ENCODE measurements at regions of chr10 and their contacts with region 1.

Region 1: DNA sequence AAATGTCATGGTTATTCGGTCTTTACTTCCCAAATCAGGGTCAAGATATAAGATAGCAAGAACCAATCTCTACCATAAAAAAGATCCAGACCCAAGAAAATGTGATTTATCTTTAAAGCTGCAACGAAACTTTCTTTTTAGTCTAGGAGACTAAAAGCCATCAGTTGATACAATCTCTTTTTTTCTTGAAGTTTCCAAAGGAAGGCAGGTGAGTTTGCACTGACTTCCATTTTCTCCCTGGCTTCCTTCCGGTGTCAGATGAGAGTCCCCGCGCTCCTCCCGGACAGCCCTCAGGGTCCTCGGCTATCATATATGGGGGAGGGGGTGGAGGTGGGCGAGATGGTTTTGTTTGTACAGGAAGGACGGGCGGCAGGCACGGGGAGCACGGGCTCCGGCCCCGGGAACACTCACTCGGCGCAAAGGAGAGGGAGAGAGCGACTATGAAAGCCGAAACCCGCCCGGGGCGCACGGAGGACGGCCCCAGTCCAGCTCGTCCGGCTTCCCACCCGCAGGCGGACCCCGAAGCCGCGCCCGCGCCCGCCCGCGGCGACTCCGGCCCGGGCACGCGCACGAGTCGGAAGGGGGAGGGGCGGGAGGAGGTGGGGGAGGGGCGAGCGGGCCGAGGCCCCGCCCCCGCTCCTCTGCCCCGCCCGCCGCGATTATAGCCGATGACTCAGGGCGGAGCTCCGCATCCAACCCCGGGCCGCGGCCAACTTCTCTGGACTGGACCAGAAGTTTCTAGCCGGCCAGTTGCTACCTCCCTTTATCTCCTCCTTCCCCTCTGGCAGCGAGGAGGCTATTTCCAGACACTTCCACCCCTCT is at the start of gene BAG3:
- DNase-seq: peak; percentile 85
- ATAC-seq: peak; percentile 94
- H3K4me3 ChIP-seq: peak within 1 kb of the TSS; percentile 82 to 96 (median 93)
- H3K4me3 Mint-ChIP-seq: peak within 1 kb of the TSS; percentile 97
- H3K27ac ChIP-seq: peak within 1 kb of the TSS; percentile 82 to 85
- H3K27ac Mint-ChIP-seq: peak within 1 kb of the TSS; percentile 94
- H3K4me1 ChIP-seq: peaks cover 3 to 12% of the 10 kb centered on the region in 2 donors
- H3K4me1 Mint-ChIP-seq: peaks cover 17% of the 10 kb centered on the region
- H3K27me3 ChIP-seq: peaks cover 0 to 3% (median 0%) of the 10 kb centered on the region in 4 experiments
- H3K27me3 Mint-ChIP-seq: no peaks in the 10 kb centered on the region
- CTCF ChIP-seq: no peak
- total RNA-seq, gene BAG3: 3.9 and 4.2 TPM in 2 replicates

Region 2: DNA sequence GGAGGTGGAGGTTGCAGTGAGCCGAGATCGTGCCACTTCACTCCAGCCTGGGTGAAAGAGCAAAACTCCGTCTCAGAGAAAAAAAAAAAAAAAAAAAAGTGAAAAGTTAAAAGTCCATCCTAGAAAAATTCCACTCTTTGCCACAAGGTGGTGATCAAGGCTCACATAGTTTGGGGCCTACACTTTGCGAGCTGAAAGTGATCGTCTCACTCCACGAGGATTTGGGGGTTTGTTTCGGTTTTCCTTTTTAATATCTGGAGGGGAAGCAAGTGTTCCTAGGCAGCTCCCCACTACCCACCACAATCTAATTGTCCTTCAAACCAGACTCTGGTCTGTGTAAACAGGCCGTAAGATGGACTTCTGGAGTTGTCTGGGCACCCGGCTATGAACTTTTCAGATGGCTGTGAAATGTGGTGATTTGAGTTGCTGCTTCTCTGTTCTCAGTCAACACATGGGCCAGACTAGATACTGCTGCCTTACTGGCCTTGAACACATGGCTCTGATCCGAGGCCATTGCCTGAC is 1082.5 kb before region 1 on chr10:
- CTCF ChIA-PET with region 1: no interaction called
- POLR2A ChIA-PET with region 1: no interaction called
- intact Hi-C with region 1: no loop called
- DNase-seq: peak; percentile 71
- ATAC-seq: peak; percentile 53
- H3K4me3 ChIP-seq: no peak overlapping the region
- H3K4me3 Mint-ChIP-seq: no peak overlapping the region
- H3K27ac ChIP-seq: no peak overlapping the region
- H3K27ac Mint-ChIP-seq: no peak overlapping the region
- H3K4me1 ChIP-seq: no peaks in the 10 kb centered on the region
- H3K4me1 Mint-ChIP-seq: no peaks in the 10 kb centered on the region
- H3K27me3 ChIP-seq: no peaks in the 10 kb centered on the region
- H3K27me3 Mint-ChIP-seq: peaks cover 15% of the 10 kb centered on the region
- CTCF ChIP-seq: peak; percentile 81

Region 3: DNA sequence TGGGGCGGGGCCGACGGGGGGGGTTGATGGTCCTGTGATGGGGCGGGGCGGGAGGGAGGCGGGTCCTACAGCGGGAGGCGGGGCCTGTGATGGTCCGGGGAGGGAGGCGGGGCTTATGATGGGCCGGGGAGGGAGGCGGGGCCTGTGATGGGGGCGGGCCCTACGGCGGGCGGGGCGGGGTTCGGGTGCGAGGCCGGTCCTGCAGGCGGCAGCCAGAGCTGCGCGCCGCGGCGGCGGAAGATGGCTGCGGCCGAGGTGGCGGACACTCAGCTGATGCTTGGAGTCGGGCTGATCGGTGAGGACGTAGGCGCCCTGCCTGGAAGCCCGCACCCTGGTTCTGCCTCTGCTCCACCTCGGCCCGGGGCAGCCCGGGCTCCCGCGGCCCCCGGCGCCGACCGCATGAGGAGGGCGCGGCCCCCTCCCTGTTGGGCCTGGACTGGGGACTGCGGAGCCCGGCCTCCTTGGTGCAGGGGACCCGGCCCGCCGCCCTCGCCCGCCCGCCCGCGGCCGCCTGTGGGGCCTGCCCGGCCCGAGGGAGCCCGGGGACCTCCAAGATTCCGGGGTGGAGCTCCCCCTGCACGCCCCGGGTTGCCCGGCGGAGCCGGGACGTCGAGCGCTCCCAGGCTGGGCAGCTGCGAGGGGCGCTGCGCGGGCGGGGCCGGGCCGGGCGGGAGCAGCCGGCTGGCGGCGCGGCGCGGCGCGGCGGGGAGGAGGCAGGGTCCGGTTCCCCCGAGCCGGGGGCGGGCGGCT is 546.8 kb before region 1 on chr10 and contains the start of gene DENND10:
- CTCF ChIA-PET with region 1: no interaction called
- POLR2A ChIA-PET with region 1: no interaction called
- intact Hi-C with region 1: loop called (anchors 5 kb)
- DNase-seq: peak; percentile 86
- ATAC-seq: peak; percentile 89
- H3K4me3 ChIP-seq: peak within 1 kb of the TSS; percentile 38 to 77 (median 68)
- H3K4me3 Mint-ChIP-seq: peak within 1 kb of the TSS; percentile 84
- H3K27ac ChIP-seq: peak within 1 kb of the TSS; percentile 2 to 4
- H3K27ac Mint-ChIP-seq: peak within 1 kb of the TSS; percentile 71
- H3K4me1 ChIP-seq: peaks cover 6 to 12% of the 10 kb centered on the region in 2 donors
- H3K4me1 Mint-ChIP-seq: peaks cover 10% of the 10 kb centered on the region
- H3K27me3 ChIP-seq: no peaks in the 10 kb centered on the region
- H3K27me3 Mint-ChIP-seq: no peaks in the 10 kb centered on the region
- CTCF ChIP-seq: no peak
- total RNA-seq, gene DENND10: 24.4 and 30.0 TPM in 2 replicates

Region 4: DNA sequence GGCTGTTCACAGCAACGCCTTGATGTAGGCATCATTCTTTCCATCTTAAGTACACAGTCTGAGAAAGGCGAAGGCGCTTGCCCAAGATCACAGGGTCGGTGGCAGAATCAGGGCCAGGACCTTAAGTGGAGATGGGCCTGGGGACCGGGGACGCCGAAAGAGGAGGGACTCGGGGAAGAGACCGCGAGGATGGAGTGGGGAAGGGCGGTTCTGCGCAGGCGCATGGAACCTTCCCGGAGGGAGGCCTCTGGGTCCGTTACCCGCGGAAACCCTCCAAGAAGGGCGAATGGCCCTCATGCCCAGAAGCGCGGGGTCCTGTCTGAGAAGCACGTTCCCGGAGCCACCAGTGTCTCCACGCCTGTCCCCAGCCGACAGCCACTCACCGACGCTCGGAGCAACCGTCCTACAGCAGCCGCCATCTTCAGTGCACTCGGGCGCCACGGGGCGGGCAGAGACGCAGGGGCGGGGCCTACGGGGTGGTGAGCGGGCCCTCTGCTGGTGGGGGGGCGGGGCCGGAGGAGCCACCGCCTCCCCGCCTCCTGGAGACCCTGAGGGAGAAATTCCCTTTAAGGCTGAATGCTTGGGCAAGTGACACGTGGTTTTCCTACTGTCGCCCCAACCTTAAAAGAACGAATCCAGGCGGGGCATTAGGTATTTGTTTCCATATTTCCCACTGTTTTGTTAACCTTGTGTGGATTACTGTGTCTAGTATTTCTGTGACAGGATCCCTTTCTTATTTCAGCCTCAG is 472.4 kb before region 1 on chr10 and contains the start of gene PRDX3:
- CTCF ChIA-PET with region 1: no interaction called
- POLR2A ChIA-PET with region 1: no interaction called
- intact Hi-C with region 1: loop called (anchors 5 kb)
- DNase-seq: peak; percentile 92
- ATAC-seq: peak; percentile 99
- H3K4me3 ChIP-seq: peak within 1 kb of the TSS; percentile 88 to 98 (median 89)
- H3K4me3 Mint-ChIP-seq: peak within 1 kb of the TSS; percentile 94
- H3K27ac ChIP-seq: peak within 1 kb of the TSS; percentile 68 to 71
- H3K27ac Mint-ChIP-seq: peak within 1 kb of the TSS; percentile 90
- H3K4me1 ChIP-seq: peaks cover 11 to 15% of the 10 kb centered on the region in 2 donors
- H3K4me1 Mint-ChIP-seq: peaks cover 28% of the 10 kb centered on the region
- H3K27me3 ChIP-seq: no peaks in the 10 kb centered on the region
- H3K27me3 Mint-ChIP-seq: no peaks in the 10 kb centered on the region
- CTCF ChIP-seq: peak; percentile 29
- total RNA-seq, gene PRDX3: 36.2 and 36.3 TPM in 2 replicates

Region 5: DNA sequence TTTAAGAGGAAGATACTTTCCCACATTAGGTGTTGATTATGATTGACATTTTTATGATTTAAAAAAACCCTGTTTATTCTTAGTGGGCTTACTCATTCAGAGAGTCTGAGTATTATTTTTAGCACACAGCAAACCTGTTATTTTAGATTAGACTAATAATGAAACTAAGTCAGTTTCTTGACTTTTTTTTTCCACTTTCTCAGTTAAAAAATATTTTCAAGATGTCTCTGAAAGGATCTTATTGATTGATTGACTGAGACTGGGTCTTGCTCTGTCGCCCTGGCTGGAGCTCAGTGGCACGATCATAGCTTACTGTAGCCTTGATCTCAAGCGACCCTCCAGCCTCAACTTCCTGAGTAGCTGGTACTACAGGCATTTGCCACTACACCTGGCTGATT is 54.5 kb after region 1 on chr10:
- CTCF ChIA-PET with region 1: no interaction called
- POLR2A ChIA-PET with region 1: no interaction called
- intact Hi-C with region 1: loop called (anchors 1 kb)
- DNase-seq: peak; percentile 62
- ATAC-seq: peak; percentile 13
- H3K4me3 ChIP-seq: peak overlapping the region in 3 of 5 experiments; percentile 18 to 46 (median 42)
- H3K4me3 Mint-ChIP-seq: peak overlapping the region; percentile 90
- H3K27ac ChIP-seq: peak overlapping the region; percentile 94
- H3K27ac Mint-ChIP-seq: peak overlapping the region; percentile 98
- H3K4me1 ChIP-seq: peaks cover 93 to 97% of the 10 kb centered on the region in 2 donors
- H3K4me1 Mint-ChIP-seq: peaks cover 81% of the 10 kb centered on the region
- H3K27me3 ChIP-seq: no peaks in the 10 kb centered on the region
- H3K27me3 Mint-ChIP-seq: no peaks in the 10 kb centered on the region
- CTCF ChIP-seq: no peak

Region 6: DNA sequence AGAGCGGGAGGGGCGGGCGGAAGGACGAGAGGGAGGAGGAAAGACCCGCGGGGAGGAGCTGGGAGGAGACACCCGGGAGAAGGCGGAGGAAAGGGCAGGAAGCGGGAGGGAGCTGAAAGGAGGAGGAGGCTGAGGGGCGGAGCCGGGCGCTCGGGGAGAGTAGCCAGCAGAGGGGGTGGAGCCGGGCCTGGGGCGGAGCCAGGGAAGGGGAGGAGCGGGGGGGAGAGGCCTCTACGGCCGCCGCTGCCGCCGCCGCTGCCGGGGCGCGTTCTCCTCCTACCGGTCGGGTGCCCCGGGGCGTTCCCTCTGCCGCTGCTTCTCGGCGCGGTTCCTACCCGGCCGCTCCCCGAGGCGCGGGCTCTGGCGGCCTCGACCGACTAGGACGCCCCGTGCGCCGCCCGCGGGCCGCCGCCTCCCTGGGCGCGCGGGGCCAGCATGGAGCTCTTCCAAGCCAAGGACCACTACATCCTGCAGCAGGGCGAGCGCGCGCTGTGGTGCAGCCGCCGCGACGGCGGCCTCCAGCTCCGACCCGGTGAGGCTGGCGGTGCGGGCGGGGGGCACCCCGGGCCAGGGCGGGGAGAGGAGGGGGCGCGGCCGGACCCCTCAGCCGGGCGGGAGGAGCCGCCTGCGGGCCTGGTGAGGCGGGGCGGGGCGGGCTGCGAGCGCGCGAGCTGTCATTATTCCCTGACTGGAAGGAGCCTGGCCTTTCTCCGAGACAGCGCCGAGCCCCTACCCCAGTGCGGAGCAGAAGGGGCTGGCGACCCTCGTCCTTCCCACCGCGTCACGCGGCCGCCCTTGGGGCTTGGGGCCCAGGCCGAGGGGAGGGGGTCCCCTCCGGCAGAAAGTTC is 75.1 kb after region 1 on chr10 and contains the start of gene INPP5F:
- CTCF ChIA-PET with region 1: interaction called, 3 read pairs
- POLR2A ChIA-PET with region 1: no interaction called
- intact Hi-C with region 1: loop called (anchors 2 kb)
- DNase-seq: peak; percentile 95
- ATAC-seq: peak; percentile 93
- H3K4me3 ChIP-seq: peak within 1 kb of the TSS; percentile 55 to 85 (median 70)
- H3K4me3 Mint-ChIP-seq: peak within 1 kb of the TSS; percentile 98
- H3K27ac ChIP-seq: peak within 1 kb of the TSS; percentile 73 to 90
- H3K27ac Mint-ChIP-seq: peak within 1 kb of the TSS; percentile 95
- H3K4me1 ChIP-seq: peaks cover 38 to 51% of the 10 kb centered on the region in 2 donors
- H3K4me1 Mint-ChIP-seq: peaks cover 48% of the 10 kb centered on the region
- H3K27me3 ChIP-seq: no peaks in the 10 kb centered on the region
- H3K27me3 Mint-ChIP-seq: no peaks in the 10 kb centered on the region
- CTCF ChIP-seq: peak; percentile 55
- total RNA-seq, gene INPP5F: 37.5 and 42.5 TPM in 2 replicates

Measured in B cell (primary cell).